A673 (cell line): ENCODE measurements at regions of chr9 and their contacts with region 1.

Region 1: GRCh38 chr9:132507746-132508469 is 74.5 kb upstream of the BARHL1 start:
- DNase-seq: peak; percentile 77
- H3K4me3 ChIP-seq: no peak overlapping the region
- H3K27ac ChIP-seq: no peak overlapping the region
- H3K4me1 ChIP-seq: no peaks in the 10 kb centered on the region
- H3K27me3 ChIP-seq: peaks cover 36% of the 10 kb centered on the region
- CTCF ChIP-seq: peak; percentile 86

Region 2: GRCh38 chr9:132312873-132313272 is 195.0 kb before region 1 on chr9:
- CTCF ChIA-PET with region 1: no interaction called
- POLR2A ChIA-PET with region 1: no interaction called
- intact Hi-C with region 1: no loop called
- DNase-seq: no peak
- H3K4me3 ChIP-seq: no peak overlapping the region
- H3K27ac ChIP-seq: no peak overlapping the region
- H3K4me1 ChIP-seq: no peaks in the 10 kb centered on the region
- H3K27me3 ChIP-seq: no peaks in the 10 kb centered on the region
- CTCF ChIP-seq: peak; percentile 27; the same call in 1 of the 2 replicates

Region 3: GRCh38 chr9:132411091-132411508 is 96.8 kb before region 1 on chr9:
- CTCF ChIA-PET with region 1: no interaction called
- POLR2A ChIA-PET with region 1: no interaction called
- intact Hi-C with region 1: loop called (anchors 5 kb)
- DNase-seq: peak; percentile 34
- H3K4me3 ChIP-seq: no peak overlapping the region
- H3K27ac ChIP-seq: no peak overlapping the region
- H3K4me1 ChIP-seq: no peaks in the 10 kb centered on the region
- H3K27me3 ChIP-seq: peaks cover 69% of the 10 kb centered on the region
- CTCF ChIP-seq: peak; percentile 75